GM12878 (cell line): ENCODE measurements at regions of chr15 and their contacts with region 1.

Region 1: DNA sequence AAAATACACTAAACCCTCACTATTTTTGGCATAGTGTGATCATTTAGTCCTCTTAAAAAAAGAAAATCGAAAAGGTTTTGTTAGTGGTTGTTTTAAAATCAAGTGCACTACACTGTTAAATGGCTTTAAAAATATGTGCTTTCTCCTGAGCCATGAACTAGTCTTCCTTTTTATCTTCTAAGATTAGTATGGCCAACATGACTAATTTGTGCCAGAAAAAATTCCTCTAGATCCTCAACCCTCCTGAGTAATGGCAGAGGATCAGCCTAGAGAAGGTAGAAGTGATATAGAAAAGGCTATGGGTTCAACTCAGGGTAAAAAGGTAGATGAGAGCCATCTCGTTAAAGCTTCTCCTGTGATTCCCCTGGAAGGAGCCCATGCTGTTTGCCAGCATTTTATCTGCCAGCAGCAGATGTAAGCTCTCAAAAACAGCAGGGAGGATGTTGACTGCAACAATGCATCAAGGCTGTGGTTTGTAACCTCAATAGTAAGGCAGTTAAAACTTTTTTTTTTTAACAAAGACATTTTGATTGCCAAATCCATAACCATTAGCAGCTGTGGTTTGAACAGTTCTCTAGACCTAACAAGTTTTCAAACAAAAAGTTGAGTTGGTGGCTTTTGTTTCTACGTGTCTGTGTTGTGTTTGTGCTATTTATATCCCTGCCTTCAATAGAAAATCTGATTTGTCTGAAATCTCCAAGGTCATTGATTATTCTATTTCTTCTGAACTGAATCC is 30.2 kb upstream of the ZNF609 start:
- DNase-seq: peak; percentile 65
- ATAC-seq: peak; percentile 87
- H3K4me3 ChIP-seq: 0 out of 2 replicates have a peak overlapping the region, but pooled peaks have one; percentile 6
- H3K27ac ChIP-seq: peak overlapping the region; percentile 87
- H3K4me1 ChIP-seq: peaks cover 19% of the 10 kb centered on the region
- H3K27me3 ChIP-seq: no peaks in the 10 kb centered on the region
- CTCF ChIP-seq: no peak
- EP300 ChIP-seq: peak in 1 of 2 experiments; percentile 55; a peak in 2 of 4 replicates
- POLR2A ChIP-seq: no peak
- RAD21 ChIP-seq: no peak

Region 2: DNA sequence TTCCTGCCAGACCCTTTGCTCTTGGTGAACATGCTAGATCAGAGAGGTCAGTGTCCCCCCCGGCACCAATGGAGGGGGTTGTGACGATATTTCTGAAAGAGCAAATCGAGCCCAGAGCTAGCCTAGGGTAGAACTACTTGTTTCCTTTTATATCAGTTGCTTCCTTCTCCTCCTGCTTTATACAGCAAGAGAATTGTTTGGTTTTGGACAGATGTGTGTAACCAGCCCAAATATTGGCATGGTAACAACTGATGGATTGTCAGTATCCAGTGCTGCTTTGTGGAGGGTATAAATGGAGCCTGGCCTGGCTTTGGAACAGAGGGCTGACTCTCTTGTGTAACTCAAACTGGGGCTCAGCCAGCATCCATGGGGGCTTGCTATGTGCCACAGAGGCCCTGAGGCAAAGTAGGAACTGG is 307.2 kb before region 1 on chr15:
- CTCF ChIA-PET with region 1: no interaction called
- POLR2A ChIA-PET with region 1: no interaction called
- RAD21 ChIA-PET with region 1: no interaction called
- SMC1A ChIA-PET with region 1: no interaction called
- in situ Hi-C with region 1: no loop called
- intact Hi-C with region 1: no loop called
- DNase-seq: no peak
- ATAC-seq: no peak
- H3K4me3 ChIP-seq: no peak overlapping the region
- H3K27ac ChIP-seq: no peak overlapping the region
- H3K4me1 ChIP-seq: no peaks in the 10 kb centered on the region
- H3K27me3 ChIP-seq: no peaks in the 10 kb centered on the region
- CTCF ChIP-seq: no peak
- EP300 ChIP-seq: no peak
- POLR2A ChIP-seq: no peak
- RAD21 ChIP-seq: no peak

Region 3: DNA sequence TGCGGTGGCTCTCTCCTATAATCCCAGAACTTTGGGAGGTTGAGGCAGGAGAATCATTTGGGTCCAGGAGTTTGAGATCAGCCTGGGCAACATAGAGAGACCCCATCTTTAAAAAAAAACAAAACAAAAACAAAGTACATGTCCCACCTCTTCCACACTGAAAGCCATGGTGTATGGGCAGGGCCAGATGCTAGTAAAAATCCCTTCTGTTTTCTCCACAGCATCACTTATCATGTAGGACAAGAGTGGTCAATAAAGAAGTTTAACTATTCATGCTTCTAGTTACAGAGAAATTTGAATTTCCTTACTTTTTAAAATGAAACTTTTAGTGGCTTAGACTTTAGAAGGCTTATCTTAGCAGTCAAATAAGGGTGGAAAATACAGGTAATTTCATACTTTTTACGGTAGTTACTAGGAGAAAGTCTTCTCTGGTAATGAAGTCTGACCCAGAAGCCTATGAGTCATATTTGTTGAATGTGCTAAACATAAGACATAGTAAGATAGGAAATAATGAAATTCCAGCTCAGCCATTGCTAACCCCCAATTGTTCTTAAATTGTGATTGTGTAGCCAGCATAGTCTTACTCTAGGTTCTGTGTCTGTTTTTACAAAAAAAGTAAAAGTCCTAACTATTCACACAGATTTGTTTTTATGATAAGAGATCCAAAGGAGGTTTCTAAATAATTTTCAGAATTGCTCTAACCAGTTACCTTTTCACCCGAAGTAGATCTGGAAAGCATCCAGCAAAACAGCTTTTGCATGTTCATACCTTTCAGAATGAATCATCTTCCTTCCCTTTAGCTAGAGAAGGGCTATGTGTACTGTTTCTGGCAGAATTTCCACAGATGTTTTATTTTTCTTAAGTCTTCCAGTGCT is 13.8 kb after region 1 on chr15:
- CTCF ChIA-PET with region 1: interaction called, 5 read pairs
- POLR2A ChIA-PET with region 1: interaction called, 5 read pairs
- RAD21 ChIA-PET with region 1: interaction called, 14 read pairs
- SMC1A ChIA-PET with region 1: interaction called, 12 read pairs
- in situ Hi-C with region 1: no loop called
- intact Hi-C with region 1: no loop called
- DNase-seq: no peak
- ATAC-seq: peak; percentile 78
- H3K4me3 ChIP-seq: peak overlapping the region; percentile 34; the same call in 1 of the 2 replicates
- H3K27ac ChIP-seq: peak overlapping the region; percentile 81
- H3K4me1 ChIP-seq: peaks cover 38% of the 10 kb centered on the region
- H3K27me3 ChIP-seq: no peaks in the 10 kb centered on the region
- CTCF ChIP-seq: no peak
- EP300 ChIP-seq: peak in 1 of 2 experiments; percentile 56; a peak in 1 of 4 replicates
- POLR2A ChIP-seq: no peak
- RAD21 ChIP-seq: 0 out of 2 replicates have a peak, but pooled peaks have one; percentile 20